Left cardiac atrium (tissue), 4 donors: ENCODE measurements at regions of chr1 and their contacts with region 1.

Region 1: DNA sequence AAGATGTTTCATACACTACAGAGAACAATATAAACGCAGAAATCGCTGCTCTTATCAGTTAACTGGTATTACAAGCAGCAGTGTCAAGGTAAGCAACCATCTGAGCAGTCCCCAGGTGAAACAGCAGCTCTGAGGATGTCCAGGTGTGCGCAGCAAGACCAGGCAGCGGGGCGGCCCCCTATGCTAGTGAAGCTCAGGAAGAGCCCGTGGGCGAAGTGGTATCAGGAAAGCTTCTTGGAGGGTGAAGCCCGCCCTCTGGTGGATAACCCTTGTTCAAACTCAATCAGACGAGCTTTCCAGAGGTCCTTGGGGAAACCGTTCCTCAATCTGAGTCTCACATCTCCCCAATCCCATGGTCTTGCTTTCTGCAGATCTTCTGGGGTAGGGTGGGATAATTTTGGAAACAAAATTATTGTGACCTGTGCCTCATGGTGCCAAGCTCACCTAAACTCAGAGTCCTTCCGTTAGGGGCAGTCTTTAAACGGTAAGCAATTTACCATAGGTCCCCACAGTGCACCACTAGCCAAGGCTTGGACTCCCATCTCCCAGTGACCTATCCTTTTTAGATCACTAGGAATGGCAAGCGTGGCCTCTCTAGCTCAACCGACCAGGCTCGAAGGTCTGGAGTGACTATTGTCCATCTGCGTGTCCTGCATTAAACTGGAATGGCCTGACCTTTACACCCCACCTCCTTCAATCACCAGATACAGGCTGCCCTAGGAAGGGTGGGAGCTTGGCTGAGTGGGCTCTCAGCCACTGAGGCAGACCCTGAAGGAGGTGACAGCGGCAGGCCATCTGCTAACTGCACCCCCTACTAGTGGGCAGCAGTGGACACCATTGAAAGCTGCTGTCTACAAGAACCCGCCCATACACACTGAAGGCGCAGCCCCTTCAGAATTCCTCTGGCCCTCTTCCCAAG is 13.6 kb upstream of the FAM110D start:
- DNase-seq: peak; percentile 81
- ATAC-seq: peak; percentile 91 to 95

Region 2: DNA sequence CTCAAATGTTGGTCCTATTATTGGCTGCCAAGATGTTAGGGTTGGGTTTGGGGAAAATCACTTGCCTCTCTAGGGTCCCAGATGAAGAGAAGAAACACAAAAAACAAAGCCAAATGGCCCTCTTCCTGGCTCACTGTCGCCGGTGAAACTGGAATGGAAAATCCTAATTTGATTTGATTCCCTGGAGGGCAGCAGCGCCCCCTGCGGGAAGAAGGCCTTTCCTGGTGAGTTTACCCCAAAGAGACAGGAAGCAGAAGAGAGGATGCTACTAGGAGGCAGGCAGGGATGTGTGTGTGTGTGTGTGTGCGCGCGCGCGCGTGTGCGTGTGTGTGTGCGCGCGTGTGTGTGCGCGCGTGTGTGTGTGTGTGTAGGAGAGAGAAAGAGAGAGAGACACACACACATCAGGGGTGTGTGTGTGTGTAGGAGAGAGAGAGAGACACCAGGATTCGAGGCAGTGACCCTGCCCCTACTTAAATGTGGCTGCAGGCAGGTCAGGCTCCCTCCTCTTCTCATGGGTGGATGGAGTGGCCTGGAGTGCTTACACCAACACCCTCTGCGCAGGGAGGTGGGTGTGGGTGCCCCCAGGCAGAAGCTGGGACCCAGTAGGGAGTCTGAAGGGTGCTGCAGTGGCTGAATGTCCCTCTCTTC is 348.4 kb before region 1 on chr1:
- intact Hi-C with region 1: no loop called
- DNase-seq: peak; percentile 86
- ATAC-seq: peak; percentile 16 to 27

Region 3: GRCh38 chr1:26035959-26036755 is 109.1 kb before region 1 on chr1:
- intact Hi-C with region 1: loop called (anchors 5 kb)
- DNase-seq: peak; percentile 87
- ATAC-seq: peak; percentile 91 to 92

Region 4: GRCh38 chr1:26111530-26112406 is 33.5 kb before region 1 on chr1 and contains the start of gene PDIK1L:
- intact Hi-C with region 1: loop called in 1 of 2 experiments (anchors 5 kb)
- DNase-seq: peak; percentile 93
- ATAC-seq: peak; percentile 94 to 96
- total RNA-seq, gene PDIK1L: 3.3 to 4.7 TPM

Region 5: DNA sequence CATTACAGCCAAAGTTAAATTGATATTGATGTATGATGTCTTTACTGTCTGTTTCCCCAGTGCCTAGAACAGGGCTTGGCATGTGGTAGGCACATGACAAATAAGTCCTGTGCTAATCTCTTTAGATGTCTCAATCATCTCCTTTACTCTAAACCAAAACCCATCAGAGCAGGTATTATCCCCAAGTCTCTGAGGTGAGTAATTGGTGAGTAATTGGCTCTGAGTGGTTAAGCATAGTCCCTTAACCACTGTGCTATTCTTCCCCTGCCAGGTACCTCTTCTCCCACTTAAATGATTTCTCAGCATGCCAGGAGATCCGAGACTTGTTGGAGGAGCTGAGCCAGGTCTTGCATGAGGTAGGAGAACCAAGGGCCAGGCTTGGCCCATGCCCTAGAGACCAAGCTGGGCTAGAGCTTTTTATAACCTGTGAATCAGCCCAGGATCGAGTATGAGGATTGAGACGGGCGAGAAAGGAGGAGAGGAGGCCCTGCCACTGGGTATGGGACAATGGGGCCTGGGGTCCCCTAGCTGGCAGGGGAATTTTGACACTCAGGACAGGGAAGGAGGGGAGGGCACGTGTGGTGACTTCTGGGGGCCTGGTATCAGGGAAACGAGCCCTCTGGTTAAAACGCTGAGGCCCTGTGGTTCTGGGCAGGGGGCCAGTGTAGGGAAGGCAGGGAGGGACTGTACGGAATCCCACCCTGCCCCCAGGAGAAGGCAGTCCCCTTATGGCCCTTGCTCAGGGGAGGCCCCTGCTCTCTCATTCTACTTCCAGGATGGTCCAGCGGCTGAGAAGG is 36.5 kb after region 1 on chr1:
- intact Hi-C with region 1: no loop called
- DNase-seq: no peak
- ATAC-seq: peak in 1 of 2 donors; percentile 22